AG04450 (cell line): ENCODE measurements at regions of chr5 and their contacts with region 1.

Region 1: DNA sequence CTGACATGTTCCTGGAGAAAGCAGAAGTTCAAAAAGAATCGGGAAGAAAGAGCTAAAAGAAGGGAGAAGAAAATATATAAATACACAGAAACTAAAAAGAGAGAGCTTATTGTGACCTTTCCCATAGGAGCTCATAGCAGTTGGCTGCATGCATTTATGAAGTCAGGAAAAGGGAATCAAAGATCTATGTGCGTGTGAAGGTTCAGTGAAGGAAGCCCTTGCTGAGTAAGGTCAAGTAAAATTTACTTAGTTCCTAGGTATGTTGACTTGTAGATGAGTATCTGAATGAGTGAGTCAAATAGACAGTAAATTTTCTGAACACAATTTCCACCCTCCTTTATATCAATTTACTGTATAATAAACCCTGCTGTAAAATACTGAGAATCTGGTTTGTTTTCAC is 632.5 kb downstream of the SLCO4C1 start:
- DNase-seq: no peak
- H3K4me3 ChIP-seq: no peak overlapping the region
- H3K27ac ChIP-seq: no peak overlapping the region
- H3K27me3 ChIP-seq: no peaks in the 10 kb centered on the region
- CTCF ChIP-seq: no peak

Region 2: GRCh38 chr5:101590384-101590783 is 73.2 kb before region 1 on chr5:
- CTCF ChIA-PET with region 1: no interaction called
- POLR2A ChIA-PET with region 1: no interaction called
- DNase-seq: no peak
- H3K4me3 ChIP-seq: no peak overlapping the region
- H3K27ac ChIP-seq: no peak overlapping the region
- H3K27me3 ChIP-seq: no peaks in the 10 kb centered on the region
- CTCF ChIP-seq: peak; percentile 12; the same call in 1 of the 2 replicates

Region 3: GRCh38 chr5:101678481-101679193 is 15.1 kb after region 1 on chr5:
- CTCF ChIA-PET with region 1: interaction called, 16 read pairs
- POLR2A ChIA-PET with region 1: no interaction called
- DNase-seq: peak; percentile 26
- H3K4me3 ChIP-seq: no peak overlapping the region
- H3K27ac ChIP-seq: no peak overlapping the region
- H3K27me3 ChIP-seq: no peaks in the 10 kb centered on the region
- CTCF ChIP-seq: peak; percentile 89